ENCODE measurements at regions of chr11 and their contacts with region 1.

Region 1: DNA sequence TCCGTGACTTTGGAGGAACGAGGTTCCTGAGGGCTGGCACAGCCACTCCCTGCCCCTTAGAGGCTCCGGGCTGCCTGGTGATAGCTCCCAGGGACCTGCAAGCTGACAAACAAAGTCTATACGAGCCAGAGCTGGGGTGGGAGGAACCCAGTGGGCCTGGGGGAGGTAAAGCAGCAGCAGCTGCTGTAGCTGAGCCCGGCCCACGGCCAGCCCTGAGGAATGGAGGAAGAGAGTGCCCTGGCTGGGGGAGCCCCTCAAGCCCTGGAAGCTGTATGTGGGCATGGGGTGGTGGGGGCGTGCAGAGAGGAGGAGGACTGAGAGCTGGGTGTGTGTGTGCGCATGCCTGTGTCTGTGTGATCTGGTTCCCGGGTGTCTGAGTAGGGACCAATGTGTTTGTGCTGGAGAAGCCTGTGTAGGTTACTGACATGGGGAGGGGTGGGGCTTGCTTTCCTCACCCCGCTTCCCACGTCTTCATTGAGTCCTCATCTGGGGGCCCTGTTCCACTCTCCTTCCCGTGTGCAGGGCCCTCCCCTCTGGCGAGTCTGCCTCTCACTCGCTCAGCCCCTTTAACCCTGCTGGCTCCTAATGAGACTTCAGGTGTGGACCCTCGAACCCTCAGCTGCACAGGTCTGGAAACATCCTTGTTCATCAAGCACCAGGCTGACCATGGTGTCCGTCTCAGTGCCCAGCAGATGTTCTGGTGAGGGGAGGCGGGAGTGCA is 10.7 kb downstream of the ST3GAL4 start:
- DNase-seq: peak; percentile 55
- ATAC-seq: peak; percentile 55

Region 2: GRCh38 chr11:126403658-126404057 is 37.4 kb after region 1 on chr11:
- intact Hi-C with region 1: loop called (anchors 5 kb)
- DNase-seq: no peak
- ATAC-seq: no peak

Region 3: DNA sequence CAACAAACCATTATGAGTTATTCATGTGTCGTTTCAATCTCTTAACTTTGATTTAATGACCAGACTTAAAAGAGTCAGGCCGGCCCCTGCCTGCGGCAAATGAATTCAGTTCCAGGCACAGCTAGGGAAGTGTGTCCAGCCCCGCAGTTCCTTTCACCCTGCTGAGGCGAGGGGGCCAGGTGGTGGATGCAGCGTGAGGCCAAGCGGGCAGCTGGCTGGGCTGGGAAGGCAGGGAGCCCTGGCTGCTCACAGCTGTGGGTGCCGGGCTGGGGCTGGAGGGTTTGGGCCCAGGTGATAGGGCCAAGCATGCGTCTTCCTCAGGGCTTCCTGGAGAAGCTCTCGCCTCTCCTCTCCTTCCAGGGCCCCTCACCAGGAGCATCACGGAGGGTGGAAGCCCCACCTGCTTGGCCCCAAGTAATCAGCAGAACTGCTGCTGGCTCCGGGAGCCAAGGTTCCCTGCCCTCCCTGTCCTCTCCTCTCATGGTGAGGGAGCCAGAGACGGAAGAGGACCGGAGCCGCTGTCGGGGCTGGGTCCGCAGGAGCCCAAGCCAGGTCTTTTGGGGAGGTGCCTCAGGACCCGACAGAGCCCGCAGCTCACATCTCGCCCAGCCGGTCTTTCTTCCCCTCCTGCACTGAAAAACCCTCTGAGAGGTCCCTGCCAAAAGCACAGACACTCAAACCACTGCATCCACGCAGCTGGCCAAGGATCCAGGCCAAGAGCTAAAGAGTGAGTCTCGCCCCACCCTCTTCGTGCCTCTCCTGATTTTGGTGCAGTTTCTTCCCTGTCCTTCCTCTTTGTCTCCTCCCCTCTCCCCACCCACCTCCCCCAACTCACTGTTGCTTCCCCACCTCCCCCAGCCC is 86.2 kb after region 1 on chr11:
- intact Hi-C with region 1: no loop called
- DNase-seq: no peak
- ATAC-seq: no peak

Measured in Right ventricle myocardium superior (tissue), 1 donor.